Activated CD4-positive, alpha-beta T cell treated with anti-CD3 and anti-CD28 coated beads for 36 hours (primary cell): ENCODE measurements at regions of chr22 and their contacts with region 1.

Region 1: GRCh38 chr22:41468381-41469217 is at the starts of genes ACO2 and PHF5A:
- DNase-seq: peak; percentile 98
- ATAC-seq: peak; percentile 94
- H3K4me3 Mint-ChIP-seq: peak within 1 kb of the TSS; percentile 90
- H3K27ac Mint-ChIP-seq: peak within 1 kb of the TSS; percentile 99
- H3K4me1 Mint-ChIP-seq: peaks cover 47% of the 10 kb centered on the region
- H3K27me3 Mint-ChIP-seq: no peaks in the 10 kb centered on the region
- total RNA-seq, gene ACO2: 95.4 to 106 TPM
- total RNA-seq, gene PHF5A: 54.5 to 61.1 TPM

Region 2: DNA sequence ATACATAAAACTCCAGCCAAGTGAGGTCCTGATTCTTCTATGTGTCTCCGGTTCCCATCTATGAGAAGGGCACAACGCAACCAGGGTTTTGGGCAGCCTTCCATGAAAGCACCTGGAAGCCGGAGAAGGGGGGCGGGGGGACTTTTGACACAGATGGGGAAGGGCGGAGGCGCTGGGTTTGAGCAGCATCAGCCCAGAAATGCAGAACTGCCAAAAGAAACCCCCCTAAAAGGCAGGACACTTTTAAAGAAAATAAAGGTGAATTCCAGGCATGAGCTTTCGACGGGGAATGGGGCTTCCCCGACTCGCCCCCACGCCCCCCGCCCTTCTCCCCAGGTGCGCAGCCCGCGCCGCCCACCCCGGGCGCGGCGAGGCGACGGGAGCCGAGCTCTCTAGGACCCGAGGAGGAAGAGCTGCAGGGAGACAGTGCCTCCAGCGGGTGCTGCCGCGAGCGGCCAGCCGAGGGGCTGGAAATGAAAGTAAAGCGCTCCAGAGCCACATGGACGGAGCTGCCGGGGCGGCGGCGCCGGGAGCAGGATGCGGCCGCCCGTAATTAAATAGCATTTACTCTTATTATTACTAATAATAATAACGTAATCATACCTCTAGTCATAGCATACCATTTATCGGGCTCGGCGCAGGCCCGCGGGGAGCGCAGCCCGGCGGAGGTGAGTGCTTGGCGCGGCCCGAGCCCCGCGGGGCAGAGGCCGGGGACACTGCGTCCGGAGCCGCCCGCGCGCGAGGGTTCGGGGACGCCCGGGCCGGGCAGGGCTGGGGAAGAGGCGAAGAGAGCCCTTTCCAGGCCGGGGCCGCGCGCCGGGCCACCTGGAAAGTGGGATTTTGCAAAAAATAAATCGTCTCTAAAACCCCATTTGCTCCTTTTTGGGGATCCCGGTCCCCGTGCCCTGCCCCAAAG is 167.2 kb before region 1 on chr22 and contains the start of gene ZC3H7B:
- CTCF ChIA-PET with region 1: interaction called, 3 read pairs
- POLR2A ChIA-PET with region 1: interaction called, 4 read pairs
- intact Hi-C with region 1: loop called in 1 of 2 experiments (anchors 5 kb)
- DNase-seq: peak; percentile 92
- ATAC-seq: peak; percentile 96
- H3K4me3 Mint-ChIP-seq: peak within 1 kb of the TSS; percentile 74
- H3K27ac Mint-ChIP-seq: peak within 1 kb of the TSS; percentile 76
- H3K4me1 Mint-ChIP-seq: peaks cover 31% of the 10 kb centered on the region
- H3K27me3 Mint-ChIP-seq: no peaks in the 10 kb centered on the region
- total RNA-seq, gene ZC3H7B: 41.7 to 43.4 TPM

Region 3: DNA sequence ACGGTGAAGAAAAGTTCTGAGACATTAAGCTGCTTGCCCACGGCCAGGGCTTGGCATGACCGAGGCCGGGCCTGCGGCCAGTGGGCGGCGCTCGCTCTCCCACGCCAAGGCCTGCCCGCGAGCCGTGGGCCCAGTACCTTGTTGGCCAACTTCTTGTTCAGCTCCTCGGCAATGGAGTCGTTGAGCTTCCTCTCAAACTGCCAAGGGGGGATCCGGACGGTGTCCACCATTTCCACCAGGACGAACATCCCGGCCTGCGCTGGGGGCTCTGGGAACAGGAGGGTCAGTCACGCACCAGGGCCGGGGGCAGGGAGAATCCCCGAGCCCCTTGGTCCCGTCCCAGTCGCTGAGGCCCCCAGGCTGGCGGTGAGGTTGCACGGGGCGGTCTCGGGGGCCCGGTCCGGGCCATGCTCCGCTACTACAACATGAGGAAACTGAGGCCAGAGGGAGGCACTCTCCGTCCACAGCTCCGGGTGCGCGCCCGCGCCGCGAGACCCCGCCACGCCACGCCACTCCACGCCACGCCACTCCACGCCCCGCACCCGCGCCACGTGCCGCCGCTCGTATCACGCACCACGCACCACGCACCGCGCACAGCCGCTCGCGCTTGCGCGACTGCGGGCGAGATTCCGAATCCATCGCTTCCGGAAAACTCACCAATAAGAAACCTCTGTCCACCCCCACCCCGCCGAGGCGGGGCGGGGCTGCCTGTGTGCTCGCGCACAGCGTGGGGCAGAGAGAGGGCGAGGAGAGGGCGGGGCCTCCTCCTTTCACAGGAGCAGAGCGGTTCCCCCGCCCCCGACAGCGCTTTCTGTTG is 75.5 kb after region 1 on chr22 and contains the start of gene POLR3H:
- CTCF ChIA-PET with region 1: no interaction called
- POLR2A ChIA-PET with region 1: no interaction called
- intact Hi-C with region 1: loop called in 1 of 2 experiments (anchors 1 kb)
- DNase-seq: peak; percentile 99
- ATAC-seq: peak; percentile 99
- H3K4me3 Mint-ChIP-seq: peak within 1 kb of the TSS; percentile 81
- H3K27ac Mint-ChIP-seq: peak within 1 kb of the TSS; percentile 90
- H3K4me1 Mint-ChIP-seq: peaks cover 40% of the 10 kb centered on the region
- H3K27me3 Mint-ChIP-seq: no peaks in the 10 kb centered on the region
- total RNA-seq, gene POLR3H: 18.3 to 24.6 TPM

Region 4: DNA sequence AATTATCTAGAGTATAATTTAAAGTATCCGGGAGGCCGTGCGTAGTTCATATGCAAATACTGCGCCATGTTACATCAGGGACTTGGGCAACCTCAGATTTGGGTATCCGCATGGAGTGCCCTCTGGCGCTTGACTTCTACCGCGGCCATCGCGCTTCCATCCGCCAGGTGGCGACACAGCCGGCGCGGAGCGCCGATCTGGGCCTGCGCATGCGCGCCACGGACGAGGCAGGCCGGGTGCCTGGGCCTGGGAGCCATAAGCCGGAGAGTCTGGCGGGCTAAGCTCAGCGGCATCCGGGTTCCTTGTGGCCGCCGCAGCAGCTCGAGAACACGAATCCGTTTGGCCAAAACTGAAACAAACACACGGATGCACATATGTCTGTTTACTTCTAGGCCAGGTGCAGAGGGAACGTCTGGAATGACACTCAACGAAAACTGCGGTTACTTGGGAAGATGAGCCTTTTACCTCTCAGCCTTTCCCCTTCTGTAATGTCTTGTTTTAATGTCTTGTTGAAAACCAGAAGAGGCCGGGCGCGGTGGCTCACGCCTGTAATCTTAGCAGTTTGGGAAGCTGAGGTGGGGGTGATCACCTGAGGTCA is 198.2 kb after region 1 on chr22:
- CTCF ChIA-PET with region 1: no interaction called
- POLR2A ChIA-PET with region 1: no interaction called
- intact Hi-C with region 1: loop called in 1 of 2 experiments (anchors 2 kb)
- DNase-seq: peak; percentile 96
- ATAC-seq: peak; percentile 94
- H3K4me3 Mint-ChIP-seq: peak overlapping the region; percentile 76
- H3K27ac Mint-ChIP-seq: peak overlapping the region; percentile 95
- H3K4me1 Mint-ChIP-seq: peaks cover 13% of the 10 kb centered on the region
- H3K27me3 Mint-ChIP-seq: no peaks in the 10 kb centered on the region